ENCODE measurements at regions of chr9 and their contacts with region 1.

Region 1: GRCh38 chr9:103530934-103531333 is 535.8 kb downstream of the CYLC2 start:
- DNase-seq: no peak

Region 2: GRCh38 chr9:103304797-103305443 is 226.0 kb before region 1 on chr9:
- intact Hi-C with region 1: no loop called
- DNase-seq: no peak

Region 3: GRCh38 chr9:103427696-103428095 is 103.2 kb before region 1 on chr9:
- intact Hi-C with region 1: no loop called
- DNase-seq: no peak

Region 4: DNA sequence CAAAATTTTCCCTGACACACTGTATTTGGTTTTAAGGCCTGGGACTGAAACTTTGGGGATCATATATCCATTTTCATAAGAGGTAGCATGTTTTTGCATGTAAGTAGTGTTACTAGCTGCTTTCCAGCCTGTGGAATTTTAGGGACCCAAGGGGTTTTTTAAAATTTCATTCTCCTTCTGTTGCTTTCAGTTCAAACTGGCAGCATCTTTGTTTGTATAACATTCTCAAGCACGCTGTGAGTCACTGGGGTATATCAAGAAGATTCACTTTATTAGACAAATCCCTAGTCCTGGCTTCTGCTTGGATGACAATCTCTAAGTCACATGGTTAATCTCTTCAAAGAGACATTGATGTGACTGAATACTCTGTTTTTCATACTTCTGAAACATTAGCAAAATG is 56.8 kb before region 1 on chr9:
- intact Hi-C with region 1: loop called (anchors 10 kb)
- DNase-seq: no peak

Region 5: GRCh38 chr9:103574056-103574455 is 43.1 kb after region 1 on chr9:
- intact Hi-C with region 1: no loop called
- DNase-seq: no peak